Activated naive CD4-positive, alpha-beta T cell treated with anti-CD3 and anti-CD28 coated beads for 36 hours (primary cell): ENCODE measurements at regions of chr16 and their contacts with region 1.

Region 1: GRCh38 chr16:58025351-58026138 is at the start of gene MMP15:
- DNase-seq: peak; percentile 60
- H3K4me3 Mint-ChIP-seq: peak within 1 kb of the TSS; percentile 79
- H3K27ac Mint-ChIP-seq: no peak within 1 kb of the TSS
- H3K4me1 Mint-ChIP-seq: peaks cover 10% of the 10 kb centered on the region
- H3K27me3 Mint-ChIP-seq: no peaks in the 10 kb centered on the region
- total RNA-seq, gene MMP15: 0.12 to 0.24 TPM

Region 2: DNA sequence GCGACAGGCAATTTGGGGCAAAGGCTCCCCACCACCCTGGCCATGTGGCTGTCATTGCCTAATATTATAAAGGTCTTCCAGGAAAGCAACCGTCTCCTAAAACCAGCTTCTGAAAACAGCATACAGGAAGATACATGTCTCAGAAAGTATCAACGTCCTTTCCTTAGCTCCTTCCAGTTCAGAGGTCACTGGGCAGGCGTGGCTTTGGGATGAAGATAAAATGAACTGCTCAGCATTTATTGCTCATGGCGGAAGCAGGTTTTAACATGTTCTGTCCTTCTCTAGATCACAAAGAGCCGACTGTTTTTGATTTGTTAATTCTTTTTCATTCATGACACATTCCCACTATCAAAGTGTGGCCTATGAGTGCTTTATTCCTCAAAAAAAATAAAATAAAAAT is 95.6 kb after region 1 on chr16:
- CTCF ChIA-PET with region 1: interaction called, 10 read pairs
- intact Hi-C with region 1: no loop called
- DNase-seq: no peak
- H3K4me3 Mint-ChIP-seq: no peak overlapping the region
- H3K27ac Mint-ChIP-seq: no peak overlapping the region
- H3K4me1 Mint-ChIP-seq: peaks cover 44% of the 10 kb centered on the region
- H3K27me3 Mint-ChIP-seq: no peaks in the 10 kb centered on the region

Region 3: GRCh38 chr16:58198022-58198683 is 172.6 kb after region 1 on chr16 and contains the start of gene CSNK2A2:
- CTCF ChIA-PET with region 1: interaction called, 4 read pairs
- intact Hi-C with region 1: loop called (anchors 2 kb)
- DNase-seq: peak; percentile 64
- H3K4me3 Mint-ChIP-seq: peak within 1 kb of the TSS; percentile 81
- H3K27ac Mint-ChIP-seq: peak within 1 kb of the TSS; percentile 66
- H3K4me1 Mint-ChIP-seq: peaks cover 30% of the 10 kb centered on the region
- H3K27me3 Mint-ChIP-seq: peaks cover 7% of the 10 kb centered on the region
- total RNA-seq, gene CSNK2A2: 86.0 to 86.7 TPM

Region 4: GRCh38 chr16:58306327-58306726 is 280.8 kb after region 1 on chr16:
- CTCF ChIA-PET with region 1: no interaction called
- intact Hi-C with region 1: loop called (anchors 1 kb)
- DNase-seq: peak; percentile 82
- H3K4me3 Mint-ChIP-seq: no peak overlapping the region
- H3K27ac Mint-ChIP-seq: no peak overlapping the region
- H3K4me1 Mint-ChIP-seq: no peaks in the 10 kb centered on the region
- H3K27me3 Mint-ChIP-seq: peaks cover 2% of the 10 kb centered on the region

Region 5: DNA sequence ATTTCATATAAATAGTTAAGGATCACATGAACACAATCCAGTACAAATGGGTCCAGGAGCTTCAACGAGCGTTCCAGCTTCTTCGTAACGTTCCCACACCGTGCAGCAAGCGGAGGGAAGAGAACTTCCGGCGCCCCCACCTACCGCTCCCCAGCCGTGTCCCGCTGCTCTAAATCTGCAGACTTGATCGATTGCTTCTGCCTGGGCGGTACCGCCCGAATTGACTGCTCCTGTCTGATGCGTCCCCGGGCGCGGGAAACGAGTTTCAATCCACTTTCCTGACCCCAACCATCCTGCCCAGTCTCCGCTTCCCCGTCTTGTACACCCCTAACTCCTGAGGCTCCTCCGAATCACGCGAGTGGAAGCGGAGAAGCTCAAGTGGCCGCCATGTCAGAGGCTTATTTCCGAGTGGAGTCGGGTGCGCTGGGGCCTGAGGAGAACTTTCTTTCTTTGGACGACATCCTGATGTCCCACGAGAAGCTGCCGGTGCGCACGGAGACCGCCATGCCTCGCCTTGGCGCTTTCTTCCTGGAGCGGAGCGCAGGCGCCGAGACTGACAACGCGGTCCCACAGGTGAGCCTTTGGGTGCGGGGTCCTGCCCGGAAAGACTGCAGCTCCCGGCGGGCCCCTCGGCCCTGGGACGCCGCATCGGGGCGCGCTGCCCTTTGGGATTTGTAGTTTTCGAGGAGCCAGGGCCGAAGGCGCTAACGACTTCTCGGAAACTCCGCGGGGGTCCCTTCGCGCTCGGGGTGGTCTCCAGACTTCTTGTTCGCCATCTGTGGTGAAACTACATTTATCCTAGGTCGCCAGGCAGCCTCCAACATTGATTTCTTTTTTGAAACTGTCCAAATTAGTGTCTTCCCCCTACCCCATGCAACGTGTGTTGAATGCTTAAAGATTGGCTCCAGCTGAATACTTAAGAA is 366.9 kb after region 1 on chr16 and contains the start of gene GINS3:
- CTCF ChIA-PET with region 1: no interaction called
- intact Hi-C with region 1: loop called (anchors 5 kb)
- DNase-seq: peak; percentile 94
- H3K4me3 Mint-ChIP-seq: peak within 1 kb of the TSS; percentile 98
- H3K27ac Mint-ChIP-seq: peak within 1 kb of the TSS; percentile 99
- H3K4me1 Mint-ChIP-seq: peaks cover 16% of the 10 kb centered on the region
- H3K27me3 Mint-ChIP-seq: no peaks in the 10 kb centered on the region
- total RNA-seq, gene GINS3: 19.2 to 20.3 TPM

Region 6: GRCh38 chr16:58487566-58488351 is 462.2 kb after region 1 on chr16:
- CTCF ChIA-PET with region 1: no interaction called
- intact Hi-C with region 1: loop called (anchors 5 kb)
- DNase-seq: peak; percentile 82
- H3K4me3 Mint-ChIP-seq: no peak overlapping the region
- H3K27ac Mint-ChIP-seq: no peak overlapping the region
- H3K4me1 Mint-ChIP-seq: no peaks in the 10 kb centered on the region
- H3K27me3 Mint-ChIP-seq: peaks cover 5% of the 10 kb centered on the region